ENCODE measurements at regions of chr5 and their contacts with region 1.

Region 1: GRCh38 chr5:125006011-125006685 is 259.7 kb upstream of the ZNF608 start:
- DNase-seq: no peak
- ATAC-seq: no peak
- H3K4me3 ChIP-seq: no peak overlapping the region
- H3K27ac ChIP-seq: no peak overlapping the region
- H3K4me1 ChIP-seq: peaks cover 2% of the 10 kb centered on the region; the same call in 1 of the 2 replicates
- H3K27me3 ChIP-seq: no peaks in the 10 kb centered on the region
- CTCF ChIP-seq: no peak
- POLR2A ChIP-seq: no peak
- RAD21 ChIP-seq: no peak

Region 2: GRCh38 chr5:124706729-124707361 is 299.3 kb before region 1 on chr5:
- CTCF ChIA-PET with region 1: no interaction called
- POLR2A ChIA-PET with region 1: no interaction called
- dilution Hi-C with region 1: no loop called
- in situ Hi-C with region 1: no loop called
- intact Hi-C with region 1: no loop called
- DNase-seq: peak; percentile 58
- ATAC-seq: peak; percentile 69
- H3K4me3 ChIP-seq: no peak overlapping the region
- H3K27ac ChIP-seq: 0 out of 2 replicates have a peak overlapping the region, but pooled peaks have one; percentile 1
- H3K4me1 ChIP-seq: peaks cover 9% of the 10 kb centered on the region; the same call in 1 of the 2 replicates
- H3K27me3 ChIP-seq: no peaks in the 10 kb centered on the region
- CTCF ChIP-seq: no peak
- POLR2A ChIP-seq: no peak
- RAD21 ChIP-seq: no peak

Region 3: DNA sequence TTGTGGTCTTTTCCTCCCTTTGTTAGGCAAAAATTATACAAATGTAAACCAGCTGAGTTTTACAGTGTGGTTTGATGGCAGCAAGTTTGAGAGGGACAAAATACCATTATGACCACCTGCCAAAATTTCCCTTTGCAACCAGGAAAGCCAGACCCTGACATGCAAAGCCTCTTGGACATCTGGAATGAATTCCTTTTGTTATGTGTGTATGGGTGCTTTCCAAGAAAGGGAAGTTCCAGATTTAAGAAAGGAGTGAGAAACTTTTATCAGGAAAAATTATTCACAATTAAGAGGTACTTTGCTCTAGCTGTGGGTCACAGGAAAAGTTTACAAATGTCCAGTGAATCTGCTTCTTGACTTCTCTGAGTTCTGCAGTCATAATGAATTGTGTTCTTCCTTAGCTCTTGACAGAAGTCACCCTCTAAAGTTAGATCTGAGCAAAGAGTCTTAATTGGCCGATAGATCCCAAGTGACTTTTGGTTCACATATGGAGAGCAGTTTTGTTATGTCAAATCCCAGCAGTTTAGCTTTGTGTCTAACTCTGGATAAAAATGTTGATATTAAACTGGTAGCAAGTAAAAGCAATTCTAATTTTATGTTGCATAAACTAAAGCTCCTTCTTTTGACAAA is 36.2 kb after region 1 on chr5:
- CTCF ChIA-PET with region 1: no interaction called
- POLR2A ChIA-PET with region 1: no interaction called
- dilution Hi-C with region 1: no loop called
- in situ Hi-C with region 1: no loop called
- intact Hi-C with region 1: loop called (anchors 1 kb)
- DNase-seq: peak; percentile 74
- ATAC-seq: no peak
- H3K4me3 ChIP-seq: no peak overlapping the region
- H3K27ac ChIP-seq: no peak overlapping the region
- H3K4me1 ChIP-seq: peaks cover 13% of the 10 kb centered on the region; the same call in 1 of the 2 replicates
- H3K27me3 ChIP-seq: no peaks in the 10 kb centered on the region
- CTCF ChIP-seq: no peak
- POLR2A ChIP-seq: no peak
- RAD21 ChIP-seq: no peak